Keratinocyte (primary cell): ENCODE measurements at regions of chr4 and their contacts with region 1.

Region 1: DNA sequence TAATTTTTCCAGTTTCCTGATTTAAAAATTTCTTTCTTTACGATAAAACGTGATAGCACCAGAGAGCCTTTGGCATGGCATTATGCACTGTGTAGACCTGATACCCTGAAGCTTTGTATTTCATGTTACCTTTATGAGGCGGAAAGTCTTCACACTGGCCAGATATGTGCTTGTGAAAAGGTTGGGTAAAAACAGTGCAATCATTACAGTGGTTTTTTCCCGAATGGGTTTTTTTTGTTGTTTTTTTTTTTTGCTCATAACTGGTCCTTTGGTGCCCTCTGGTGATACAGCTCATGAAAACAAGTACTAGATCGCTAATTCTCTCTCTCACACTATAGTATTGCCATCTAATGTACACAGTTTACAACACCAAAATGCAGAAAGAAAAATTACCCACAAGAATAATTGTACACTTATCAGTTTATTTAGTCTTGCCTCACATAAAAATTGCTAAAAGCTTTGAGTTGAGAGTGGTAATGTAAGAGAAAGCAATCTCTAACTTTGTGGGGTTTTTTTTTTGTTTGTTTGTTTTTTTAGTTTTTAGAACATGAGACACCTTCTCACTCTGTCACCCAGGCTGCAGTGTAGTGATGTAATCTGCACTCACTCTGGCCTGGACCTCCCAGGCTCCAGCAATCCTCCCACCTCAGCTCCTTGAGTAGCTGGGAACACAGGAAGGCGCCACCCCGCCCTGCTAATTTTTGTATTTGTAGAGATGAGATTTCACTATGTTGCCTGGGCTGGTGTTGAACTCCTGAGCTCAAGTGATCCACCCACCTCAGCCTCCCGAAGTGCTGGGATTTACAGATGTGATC is 21.3 kb downstream of the SPCS3 start:
- DNase-seq: no peak
- H3K4me3 ChIP-seq: no peak overlapping the region
- H3K27ac ChIP-seq: no peak overlapping the region
- H3K4me1 ChIP-seq: no peaks in the 10 kb centered on the region
- H3K27me3 ChIP-seq: no peaks in the 10 kb centered on the region
- CTCF ChIP-seq: peak in 2 of 3 experiments; percentile 31 to 36

Region 2: DNA sequence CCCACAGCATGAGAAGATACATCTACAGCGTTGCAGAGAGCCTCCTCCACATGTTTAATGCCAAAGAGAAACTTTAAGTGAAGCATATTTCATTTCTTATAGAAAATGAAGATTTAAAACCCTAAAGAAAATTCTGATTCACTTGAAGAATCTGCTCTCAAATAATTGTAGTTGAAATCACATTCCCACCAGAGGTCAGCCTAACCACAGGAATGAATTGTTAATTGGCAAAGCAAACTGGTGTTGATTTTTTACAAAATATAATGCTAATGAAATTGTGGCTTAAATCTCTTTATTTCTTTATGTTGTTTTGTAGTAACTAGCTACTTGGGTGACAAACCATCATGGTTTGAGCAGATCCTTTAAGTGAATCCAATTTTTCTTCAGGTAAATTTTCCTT is 306.6 kb before region 1 on chr4:
- dilution Hi-C with region 1: loop called (anchors 25 kb)
- DNase-seq: no peak
- H3K4me3 ChIP-seq: no peak overlapping the region
- H3K27ac ChIP-seq: no peak overlapping the region
- H3K4me1 ChIP-seq: peaks cover 7% of the 10 kb centered on the region
- H3K27me3 ChIP-seq: no peaks in the 10 kb centered on the region
- CTCF ChIP-seq: no peak

Region 3: DNA sequence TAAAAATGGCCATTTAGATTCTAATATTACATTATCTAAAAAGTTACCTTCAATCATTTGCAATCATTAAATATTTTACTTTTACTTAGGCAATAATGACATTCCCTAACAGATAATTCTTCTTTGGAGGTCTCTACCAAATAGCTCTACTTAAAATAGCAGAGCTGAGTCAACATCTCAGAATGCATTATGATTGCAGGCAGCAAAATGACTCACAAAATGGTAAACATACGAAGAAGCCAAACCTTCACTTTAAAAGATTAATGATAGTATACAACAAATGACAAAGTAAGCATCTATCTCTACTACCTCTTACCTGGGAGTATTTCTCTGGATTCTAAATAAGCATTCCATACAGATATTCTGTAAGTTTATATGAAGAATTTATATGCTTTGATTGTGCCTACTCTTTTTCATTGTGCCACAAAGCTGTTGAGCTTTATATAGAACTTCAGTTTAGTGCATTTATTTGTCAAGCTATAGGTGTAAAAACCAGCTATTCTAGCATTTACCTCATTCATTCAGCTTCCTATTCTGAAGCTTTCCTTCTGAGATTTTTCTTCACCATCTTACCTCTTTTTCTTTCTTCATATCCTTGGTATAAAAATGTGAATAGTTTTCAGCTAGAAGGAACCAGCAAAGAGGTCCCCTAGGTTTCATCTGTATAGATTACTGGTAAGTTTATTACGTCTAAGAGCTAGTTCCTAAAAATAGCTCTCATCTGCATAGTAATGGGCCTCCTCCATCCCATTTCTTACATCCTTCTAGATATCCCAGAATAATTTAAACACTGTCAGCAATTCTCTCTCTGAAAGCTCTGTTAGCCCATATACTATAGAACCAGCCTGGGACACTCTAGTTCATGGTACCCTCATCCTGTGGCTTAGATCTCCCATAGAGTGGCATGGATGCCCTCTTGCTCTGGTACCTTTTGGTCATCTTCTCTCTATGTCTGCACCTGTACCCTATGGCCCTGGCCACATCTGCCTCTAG is 38.5 kb before region 1 on chr4:
- dilution Hi-C with region 1: no loop called
- DNase-seq: no peak
- H3K4me3 ChIP-seq: no peak overlapping the region
- H3K27ac ChIP-seq: no peak overlapping the region
- H3K4me1 ChIP-seq: peaks cover 6% of the 10 kb centered on the region
- H3K27me3 ChIP-seq: no peaks in the 10 kb centered on the region
- CTCF ChIP-seq: no peak